ENCODE measurements at regions of chr16 and their contacts with region 1.

Region 1: GRCh38 chr16:11255737-11256660 is at the start of gene SOCS1:
- DNase-seq: peak; percentile 91
- ATAC-seq: peak; percentile 71
- H3K4me3 Mint-ChIP-seq: peak within 1 kb of the TSS; percentile 97
- H3K27ac Mint-ChIP-seq: peak within 1 kb of the TSS; percentile 96
- H3K4me1 Mint-ChIP-seq: peaks cover 54% of the 10 kb centered on the region
- H3K27me3 Mint-ChIP-seq: no peaks in the 10 kb centered on the region
- total RNA-seq, gene SOCS1: 170 to 174 TPM

Region 2: GRCh38 chr16:10949370-10949970 is 306.5 kb before region 1 on chr16:
- CTCF ChIA-PET with region 1: interaction called, 11 read pairs
- POLR2A ChIA-PET with region 1: interaction called, 9 read pairs
- DNase-seq: peak; percentile 80
- ATAC-seq: peak; percentile 76
- H3K4me3 Mint-ChIP-seq: peak overlapping the region; percentile 0
- H3K27ac Mint-ChIP-seq: peak overlapping the region; percentile 28
- H3K4me1 Mint-ChIP-seq: peaks cover 61% of the 10 kb centered on the region
- H3K27me3 Mint-ChIP-seq: no peaks in the 10 kb centered on the region

Region 3: DNA sequence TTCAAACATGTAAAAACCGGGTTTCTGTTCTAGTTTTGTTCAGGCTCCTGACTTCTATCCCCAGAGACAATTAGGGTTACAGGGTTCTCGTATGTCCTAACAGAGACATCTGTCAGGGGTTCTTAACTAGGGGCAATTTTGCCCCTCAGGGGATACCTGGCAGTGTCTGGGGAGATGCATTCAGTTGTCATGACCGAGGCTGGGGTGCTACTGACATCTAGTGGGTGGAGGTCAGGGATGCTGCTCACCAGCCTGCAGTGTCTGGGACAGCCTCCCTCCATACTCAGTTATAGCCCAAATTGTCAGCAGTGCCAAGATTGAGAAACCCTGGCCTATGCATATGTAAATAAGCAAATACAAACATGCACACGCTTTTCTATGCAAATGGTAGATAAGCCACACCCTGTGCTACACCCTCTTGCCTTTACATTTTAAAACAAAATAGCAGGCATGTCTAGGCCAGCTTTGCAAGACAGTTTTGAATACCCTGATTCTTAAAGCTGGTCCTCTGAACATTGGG is 274.2 kb before region 1 on chr16:
- CTCF ChIA-PET with region 1: interaction called, 19 read pairs
- POLR2A ChIA-PET with region 1: interaction called, 15 read pairs
- DNase-seq: peak; percentile 75
- ATAC-seq: peak; percentile 83
- H3K4me3 Mint-ChIP-seq: no peak overlapping the region
- H3K27ac Mint-ChIP-seq: peak overlapping the region; percentile 64
- H3K4me1 Mint-ChIP-seq: peaks cover 81% of the 10 kb centered on the region
- H3K27me3 Mint-ChIP-seq: no peaks in the 10 kb centered on the region

Region 4: GRCh38 chr16:11094072-11094856 is 161.7 kb before region 1 on chr16:
- CTCF ChIA-PET with region 1: interaction called, 9 read pairs
- POLR2A ChIA-PET with region 1: interaction called, 42 read pairs
- DNase-seq: peak; percentile 81
- ATAC-seq: peak; percentile 85
- H3K4me3 Mint-ChIP-seq: peak overlapping the region; percentile 39
- H3K27ac Mint-ChIP-seq: peak overlapping the region; percentile 90
- H3K4me1 Mint-ChIP-seq: peaks cover 94% of the 10 kb centered on the region
- H3K27me3 Mint-ChIP-seq: no peaks in the 10 kb centered on the region

Region 5: GRCh38 chr16:11224096-11224893 is 31.7 kb before region 1 on chr16:
- CTCF ChIA-PET with region 1: interaction called, 51 read pairs
- POLR2A ChIA-PET with region 1: interaction called, 123 read pairs
- DNase-seq: peak; percentile 90
- ATAC-seq: peak; percentile 77
- H3K4me3 Mint-ChIP-seq: peak overlapping the region; percentile 80
- H3K27ac Mint-ChIP-seq: peak overlapping the region; percentile 99
- H3K4me1 Mint-ChIP-seq: peaks cover 82% of the 10 kb centered on the region
- H3K27me3 Mint-ChIP-seq: no peaks in the 10 kb centered on the region

Region 6: DNA sequence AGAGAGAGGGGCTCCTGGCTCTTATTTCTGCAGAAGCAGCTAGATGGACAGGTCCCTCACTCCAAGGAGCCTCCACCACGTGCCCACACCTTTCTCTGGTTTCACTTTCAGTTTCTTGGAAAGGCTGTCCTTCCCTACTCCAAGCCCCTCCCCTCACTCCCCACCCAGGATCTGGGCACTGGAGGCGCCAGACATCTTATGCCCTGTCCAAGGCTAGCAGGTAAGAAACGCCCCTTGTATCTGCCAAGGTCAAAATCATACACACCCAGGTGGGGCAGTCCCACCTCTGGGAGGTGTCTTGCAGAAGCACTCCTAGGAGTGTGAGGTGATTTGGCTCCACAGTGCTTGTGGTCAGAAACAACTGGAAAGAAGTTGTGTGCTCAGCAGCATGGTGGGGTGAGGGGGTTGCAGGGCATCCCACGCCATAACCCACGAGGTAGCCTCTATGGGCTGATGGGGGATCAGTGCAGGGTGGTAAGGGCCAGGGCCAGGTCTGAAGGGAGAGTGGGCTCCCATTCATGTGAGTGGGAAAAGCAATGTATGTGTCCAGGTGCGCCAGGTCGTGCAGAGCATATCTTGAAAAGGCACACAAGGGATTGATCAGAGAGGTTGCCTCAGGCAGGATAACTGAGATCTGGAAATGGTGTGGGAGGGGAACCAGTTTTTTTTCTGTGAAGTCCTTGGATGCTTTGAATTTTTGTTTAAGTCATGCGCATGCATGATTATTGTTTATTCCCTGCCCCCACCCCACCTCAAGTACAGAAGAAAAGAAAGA is 56.9 kb after region 1 on chr16:
- CTCF ChIA-PET with region 1: interaction called, 15 read pairs
- POLR2A ChIA-PET with region 1: interaction called, 23 read pairs
- DNase-seq: peak; percentile 63
- ATAC-seq: peak; percentile 29
- H3K4me3 Mint-ChIP-seq: peak overlapping the region; percentile 12
- H3K27ac Mint-ChIP-seq: peak overlapping the region; percentile 65
- H3K4me1 Mint-ChIP-seq: peaks cover 80% of the 10 kb centered on the region
- H3K27me3 Mint-ChIP-seq: no peaks in the 10 kb centered on the region

Region 7: GRCh38 chr16:11526655-11527350 is 270.8 kb after region 1 on chr16:
- CTCF ChIA-PET with region 1: no interaction called
- POLR2A ChIA-PET with region 1: no interaction called
- DNase-seq: no peak
- ATAC-seq: no peak
- H3K4me3 Mint-ChIP-seq: no peak overlapping the region
- H3K27ac Mint-ChIP-seq: no peak overlapping the region
- H3K4me1 Mint-ChIP-seq: no peaks in the 10 kb centered on the region
- H3K27me3 Mint-ChIP-seq: no peaks in the 10 kb centered on the region

Measured in activated CD8-positive, alpha-beta T cell treated with anti-CD3 and anti-CD28 coated beads, Interleukin-2, amount 10 ng/mL, durations not matched to agents 7 days and 5 days (primary cell).